K562 (cell line): ENCODE measurements at regions of chr9 and their contacts with region 1.

Region 1: GRCh38 chr9:116494815-116495634 is 192.1 kb upstream of the TRIM32 start:
- DNase-seq: peak; percentile 41 to 73 (median 56)
- ATAC-seq: peak; percentile 83
- H3K4me3 ChIP-seq: no peak overlapping the region
- H3K27ac ChIP-seq: no peak overlapping the region
- H3K4me1 ChIP-seq: peaks cover 0 to 6% of the 10 kb centered on the region in 2 experiments; a peak in 2 of 5 replicates
- H3K27me3 ChIP-seq: no peaks in the 10 kb centered on the region
- CTCF ChIP-seq: peak; percentile 69 to 87 (median 70)
- EP300 ChIP-seq: no peak; the same call in 1 of the 2 replicates
- POLR2A ChIP-seq: no peak
- RAD21 ChIP-seq: peak; percentile 56 to 81

Region 2: GRCh38 chr9:115883457-115884329 is 611.3 kb before region 1 on chr9:
- CTCF ChIA-PET with region 1: no interaction called
- POLR2A ChIA-PET with region 1: no interaction called
- in situ Hi-C with region 1: no loop called
- intact Hi-C with region 1: loop called (anchors 10 kb)
- DNase-seq: peak in 1 of 4 experiments; percentile 5
- ATAC-seq: no peak
- H3K4me3 ChIP-seq: no peak overlapping the region
- H3K27ac ChIP-seq: no peak overlapping the region
- H3K4me1 ChIP-seq: no peaks in the 10 kb centered on the region
- H3K27me3 ChIP-seq: no peaks in the 10 kb centered on the region
- CTCF ChIP-seq: 0 out of 6 replicates have a peak, but pooled peaks of 1 of the 3 experiments have one; percentile 13
- EP300 ChIP-seq: no peak
- POLR2A ChIP-seq: no peak
- RAD21 ChIP-seq: peak in 1 of 2 experiments; percentile 22; a peak in 1 of 4 replicates

Region 3: GRCh38 chr9:116219686-116220085 is 275.3 kb before region 1 on chr9:
- CTCF ChIA-PET with region 1: no interaction called
- POLR2A ChIA-PET with region 1: no interaction called
- in situ Hi-C with region 1: no loop called
- intact Hi-C with region 1: loop called (anchors 1 kb)
- DNase-seq: peak in 2 of 4 experiments; percentile 23 to 44
- ATAC-seq: peak; percentile 89
- H3K4me3 ChIP-seq: no peak overlapping the region
- H3K27ac ChIP-seq: no peak overlapping the region
- H3K4me1 ChIP-seq: peaks cover 0 to 10% of the 10 kb centered on the region in 2 experiments; a peak in 1 of 5 replicates
- H3K27me3 ChIP-seq: no peaks in the 10 kb centered on the region
- CTCF ChIP-seq: peak in 2 of 3 experiments; percentile 10 to 52; a peak in 2 of 6 replicates
- EP300 ChIP-seq: no peak
- POLR2A ChIP-seq: no peak
- RAD21 ChIP-seq: peak; percentile 53 to 66

Region 4: GRCh38 chr9:116420993-116421538 is 74.0 kb before region 1 on chr9:
- CTCF ChIA-PET with region 1: interaction called, 4 read pairs
- POLR2A ChIA-PET with region 1: no interaction called
- in situ Hi-C with region 1: no loop called
- intact Hi-C with region 1: loop called (anchors 5 kb)
- DNase-seq: peak in 2 of 4 experiments; percentile 40 to 67
- ATAC-seq: peak; percentile 11
- H3K4me3 ChIP-seq: no peak overlapping the region
- H3K27ac ChIP-seq: peak overlapping the region; percentile 16; the same call in 1 of the 3 replicates
- H3K4me1 ChIP-seq: peaks cover 13 to 63% of the 10 kb centered on the region in 2 experiments
- H3K27me3 ChIP-seq: no peaks in the 10 kb centered on the region
- CTCF ChIP-seq: no peak
- EP300 ChIP-seq: no peak
- POLR2A ChIP-seq: no peak
- RAD21 ChIP-seq: no peak

Region 5: DNA sequence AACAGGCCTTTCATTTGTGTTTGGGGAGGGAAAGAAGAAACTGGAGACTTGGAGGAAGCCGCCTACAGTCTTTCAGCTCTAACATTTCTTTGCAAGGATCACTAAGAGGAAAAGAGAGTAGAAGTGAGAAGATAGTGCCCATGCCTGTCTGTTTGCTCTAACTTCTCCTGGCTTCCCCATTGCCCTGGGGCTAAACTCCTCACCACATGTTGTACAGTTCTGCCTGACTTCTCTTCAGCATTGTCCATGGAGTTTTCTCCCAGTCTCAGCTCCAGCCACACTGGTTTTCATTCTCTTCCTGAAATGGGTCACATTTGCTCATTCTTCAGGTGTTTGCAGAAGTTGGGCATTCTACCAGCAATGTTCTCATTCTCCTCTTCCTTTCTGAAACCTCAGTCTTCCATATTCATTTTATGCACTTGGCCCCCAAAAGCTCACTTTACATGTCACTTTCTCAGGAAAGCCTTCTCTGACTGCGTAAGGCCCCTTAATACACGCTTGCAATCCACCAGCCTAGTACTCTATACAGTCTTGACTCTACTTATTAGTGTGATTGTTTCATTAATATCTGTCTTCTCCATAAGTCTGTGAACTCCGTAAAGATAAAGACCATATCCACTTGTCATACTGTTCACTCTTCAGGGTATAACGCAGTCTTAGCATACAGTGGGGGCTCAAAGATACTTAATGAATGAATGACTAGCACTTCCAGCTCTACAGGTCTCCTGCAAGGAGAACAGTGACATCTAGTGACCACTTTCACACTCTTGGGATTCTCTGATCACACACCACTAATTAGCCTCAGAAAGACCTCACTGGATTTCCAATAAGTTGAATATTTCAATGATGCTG is 151.9 kb after region 1 on chr9:
- CTCF ChIA-PET with region 1: no interaction called
- POLR2A ChIA-PET with region 1: no interaction called
- in situ Hi-C with region 1: no loop called
- intact Hi-C with region 1: loop called (anchors 5 kb)
- DNase-seq: peak in 3 of 4 experiments; percentile 9 to 40 (median 18)
- ATAC-seq: peak; percentile 88
- H3K4me3 ChIP-seq: no peak overlapping the region
- H3K27ac ChIP-seq: no peak overlapping the region
- H3K4me1 ChIP-seq: no peaks in the 10 kb centered on the region
- H3K27me3 ChIP-seq: no peaks in the 10 kb centered on the region
- CTCF ChIP-seq: peak; percentile 47 to 68 (median 58)
- EP300 ChIP-seq: no peak
- POLR2A ChIP-seq: no peak
- RAD21 ChIP-seq: peak; percentile 72 to 74